Tibial artery (tissue), 4 donors: ENCODE measurements at regions of chr2 and their contacts with region 1.

Region 1: DNA sequence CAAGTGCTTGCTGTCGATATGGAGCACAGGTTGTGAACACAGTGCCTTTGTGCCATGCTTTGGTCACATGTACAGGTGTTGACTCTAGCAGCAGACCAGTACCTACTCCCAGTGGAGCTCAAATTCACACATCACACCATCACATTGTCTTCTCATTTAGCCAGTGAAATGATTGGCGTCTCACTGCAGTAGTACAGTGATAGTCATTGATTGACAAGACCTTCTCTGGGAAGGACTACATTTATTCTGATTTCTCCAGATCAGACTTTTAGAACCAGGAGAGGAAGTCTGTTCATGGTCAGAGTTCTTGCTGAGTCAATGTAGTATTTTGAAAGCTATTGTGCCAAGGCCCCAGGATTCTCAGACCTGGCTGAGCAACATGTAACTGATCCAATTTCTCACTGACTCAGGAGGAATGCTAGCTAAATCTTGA is 75.2 kb downstream of the FMNL2 start:
- DNase-seq: no peak
- H3K4me3 ChIP-seq: no peak overlapping the region
- H3K27ac ChIP-seq: no peak overlapping the region
- H3K4me1 ChIP-seq: peaks cover 0 to 79% (median 32%) of the 10 kb centered on the region in 4 donors
- H3K27me3 ChIP-seq: no peaks in the 10 kb centered on the region
- CTCF ChIP-seq: no peak

Region 2: DNA sequence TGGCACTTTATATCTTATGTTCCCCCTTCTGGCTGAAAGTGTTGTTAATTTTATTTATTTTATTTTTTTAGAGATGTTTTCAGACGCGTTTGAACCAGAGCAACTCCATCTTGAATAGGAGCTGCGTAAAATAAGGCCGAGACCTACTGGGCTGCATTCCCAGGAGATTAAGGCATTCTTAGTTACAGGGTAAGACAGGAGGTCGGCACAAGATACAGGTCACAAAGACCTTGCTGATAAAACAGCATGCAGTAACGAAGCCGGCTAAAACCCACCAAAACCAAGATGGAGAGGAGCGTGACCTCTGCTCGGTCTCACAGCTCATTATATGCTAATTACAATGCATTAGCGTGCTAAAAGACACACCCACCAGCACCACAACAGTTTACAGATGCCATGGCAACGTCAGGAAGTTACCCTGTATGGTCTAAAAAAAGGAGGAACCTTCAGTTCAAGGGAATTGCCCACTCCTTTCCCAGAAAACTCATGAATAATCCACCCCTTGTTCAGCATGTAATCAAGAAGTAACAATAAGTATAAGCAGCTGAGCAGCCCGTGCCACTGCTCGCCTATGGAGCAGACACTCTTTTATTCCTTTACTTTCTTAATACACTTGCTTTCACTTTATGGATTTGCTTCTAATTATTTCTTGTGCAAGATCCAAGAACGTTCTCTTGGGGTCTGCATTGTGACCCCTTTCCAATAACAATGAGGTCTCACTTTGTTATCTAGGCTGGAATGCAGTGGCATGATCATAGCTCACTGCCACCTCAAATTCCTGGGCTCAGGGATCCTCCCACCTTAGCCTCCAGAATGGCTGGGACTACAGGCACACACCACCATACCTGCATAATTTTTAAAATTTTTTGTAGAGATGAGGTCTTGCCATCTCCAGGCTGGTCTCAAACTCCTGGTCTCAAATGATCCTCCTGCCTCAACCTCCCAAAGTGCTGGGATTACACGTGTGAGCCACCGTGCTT is 367.3 kb before region 1 on chr2:
- intact Hi-C with region 1: loop called (anchors 5 kb)
- DNase-seq: no peak
- H3K4me3 ChIP-seq: no peak overlapping the region
- H3K27ac ChIP-seq: no peak overlapping the region
- H3K4me1 ChIP-seq: no peaks in the 10 kb centered on the region
- H3K27me3 ChIP-seq: no peaks in the 10 kb centered on the region
- CTCF ChIP-seq: no peak

Region 3: GRCh38 chr2:152558158-152558984 is 148.2 kb after region 1 on chr2:
- intact Hi-C with region 1: no loop called
- DNase-seq: no peak
- H3K4me3 ChIP-seq: no peak overlapping the region
- H3K27ac ChIP-seq: no peak overlapping the region
- H3K4me1 ChIP-seq: no peaks in the 10 kb centered on the region
- H3K27me3 ChIP-seq: no peaks in the 10 kb centered on the region
- CTCF ChIP-seq: no peak